CD8-positive, alpha-beta memory T cell (primary cell): ENCODE measurements at regions of chr1 and their contacts with region 1.

Region 1: DNA sequence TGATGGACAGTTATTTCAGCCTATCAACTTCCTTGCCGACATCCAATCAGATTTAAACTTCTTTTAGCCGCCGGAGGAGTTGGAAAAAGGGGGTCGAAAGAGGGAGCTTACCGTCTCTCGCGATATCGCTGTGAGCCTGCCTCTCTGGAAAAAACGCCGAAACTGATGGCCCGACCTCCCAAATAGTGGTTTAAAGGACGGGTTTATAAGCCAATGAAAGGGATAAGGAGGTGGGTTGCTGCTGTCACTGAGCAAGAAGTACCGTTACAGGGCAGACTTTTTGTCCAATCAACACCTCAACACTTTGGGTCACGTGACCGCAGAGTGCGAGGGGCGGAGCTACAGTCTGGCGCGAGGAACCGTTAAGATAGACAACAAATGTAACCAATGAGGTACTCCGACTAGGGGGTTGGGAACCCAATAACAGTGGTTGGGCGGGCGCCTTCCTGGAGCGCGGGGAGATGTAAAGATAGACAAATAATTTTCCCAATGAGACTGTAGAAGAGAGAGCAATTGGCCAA is at the start of gene RBM15:
- DNase-seq: peak; percentile 93 to 99 (median 99)
- H3K4me3 ChIP-seq: peak within 1 kb of the TSS; percentile 80
- H3K4me3 Mint-ChIP-seq: no peak within 1 kb of the TSS
- H3K27ac ChIP-seq: peak within 1 kb of the TSS; percentile 97
- H3K27ac Mint-ChIP-seq: peak within 1 kb of the TSS in 2 of 8 donors; percentile 98
- H3K4me1 ChIP-seq: peaks cover 48% of the 10 kb centered on the region
- H3K4me1 Mint-ChIP-seq: peaks cover 53 to 63% (median 62%) of the 10 kb centered on the region in 3 donors
- H3K27me3 ChIP-seq: no peaks in the 10 kb centered on the region
- H3K27me3 Mint-ChIP-seq: no peaks in the 10 kb centered on the region
- total RNA-seq, gene RBM15: 53.9 to 54.0 TPM

Region 2: DNA sequence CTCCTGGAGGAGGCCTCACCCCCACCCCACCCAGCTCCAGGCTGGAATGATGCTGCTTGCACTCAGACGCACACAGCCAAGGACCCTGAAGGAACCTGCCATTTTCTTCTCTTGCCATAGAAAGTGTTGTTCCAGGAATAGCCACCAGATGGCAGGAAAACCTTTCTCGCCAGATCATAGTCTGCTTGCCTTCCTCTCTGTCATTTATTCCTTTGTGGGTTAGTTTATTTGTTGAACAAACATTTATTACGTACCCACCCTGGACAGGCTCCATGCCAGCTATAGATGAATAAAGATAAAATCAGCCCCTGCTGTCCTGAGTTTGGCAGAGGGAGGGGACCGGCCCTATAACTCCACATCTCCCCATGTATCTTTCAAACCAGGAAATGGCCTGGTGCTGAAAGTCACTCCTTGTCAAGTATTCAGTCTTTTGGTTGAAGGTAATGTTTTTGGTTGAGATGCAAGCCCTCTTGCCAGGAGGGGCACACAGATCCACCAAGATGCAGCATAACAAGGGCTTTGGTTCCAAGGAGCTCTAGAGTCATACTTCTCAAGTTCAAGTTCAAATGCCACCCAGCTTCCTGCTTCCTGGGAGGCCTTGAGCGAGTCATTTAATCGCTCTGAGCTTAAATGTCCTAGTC is 135.8 kb before region 1 on chr1:
- CTCF ChIA-PET with region 1: interaction called, 77 read pairs
- POLR2A ChIA-PET with region 1: interaction called, 42 read pairs
- DNase-seq: peak; percentile 38 to 75 (median 67)
- H3K4me3 ChIP-seq: no peak overlapping the region
- H3K4me3 Mint-ChIP-seq: peak overlapping the region in 1 of 7 donors; percentile 32
- H3K27ac ChIP-seq: no peak overlapping the region
- H3K27ac Mint-ChIP-seq: peak overlapping the region; percentile 14 to 86 (median 74)
- H3K4me1 ChIP-seq: peaks cover 20% of the 10 kb centered on the region
- H3K4me1 Mint-ChIP-seq: peaks cover 14 to 26% (median 24%) of the 10 kb centered on the region in 3 donors
- H3K27me3 ChIP-seq: no peaks in the 10 kb centered on the region
- H3K27me3 Mint-ChIP-seq: peaks cover 0 to 2% of the 10 kb centered on the region in 2 donors

Region 3: GRCh38 chr1:110312188-110313121 is 26.5 kb before region 1 on chr1:
- CTCF ChIA-PET with region 1: interaction called, 19 read pairs
- POLR2A ChIA-PET with region 1: interaction called, 5 read pairs
- DNase-seq: peak; percentile 57 to 82 (median 62)
- H3K4me3 ChIP-seq: no peak overlapping the region
- H3K4me3 Mint-ChIP-seq: peak overlapping the region in 1 of 7 donors; percentile 54
- H3K27ac ChIP-seq: no peak overlapping the region
- H3K27ac Mint-ChIP-seq: no peak overlapping the region
- H3K4me1 ChIP-seq: no peaks in the 10 kb centered on the region
- H3K4me1 Mint-ChIP-seq: peaks cover 0 to 2% (median 0%) of the 10 kb centered on the region in 3 donors
- H3K27me3 ChIP-seq: no peaks in the 10 kb centered on the region
- H3K27me3 Mint-ChIP-seq: peaks cover 0 to 2% of the 10 kb centered on the region in 2 donors

Region 4: GRCh38 chr1:110384581-110385321 is 45.8 kb after region 1 on chr1:
- CTCF ChIA-PET with region 1: interaction called, 14 read pairs
- POLR2A ChIA-PET with region 1: interaction called, 4 read pairs
- DNase-seq: no peak
- H3K4me3 ChIP-seq: no peak overlapping the region
- H3K4me3 Mint-ChIP-seq: no peak overlapping the region
- H3K27ac ChIP-seq: no peak overlapping the region
- H3K27ac Mint-ChIP-seq: peak overlapping the region in 5 of 8 donors; percentile 29 to 95 (median 38)
- H3K4me1 ChIP-seq: peaks cover 10% of the 10 kb centered on the region
- H3K4me1 Mint-ChIP-seq: peaks cover 15 to 21% (median 20%) of the 10 kb centered on the region in 3 donors
- H3K27me3 ChIP-seq: no peaks in the 10 kb centered on the region
- H3K27me3 Mint-ChIP-seq: no peaks in the 10 kb centered on the region

Region 5: GRCh38 chr1:110407260-110408210 is 68.6 kb after region 1 on chr1 and contains the start of gene LAMTOR5:
- CTCF ChIA-PET with region 1: interaction called, 9 read pairs
- POLR2A ChIA-PET with region 1: interaction called, 16 read pairs
- DNase-seq: peak; percentile 85 to 93 (median 87)
- H3K4me3 ChIP-seq: peak within 1 kb of the TSS; percentile 100
- H3K4me3 Mint-ChIP-seq: peak within 1 kb of the TSS; percentile 95 to 100 (median 99)
- H3K27ac ChIP-seq: peak within 1 kb of the TSS; percentile 97
- H3K27ac Mint-ChIP-seq: peak within 1 kb of the TSS; percentile 90 to 100 (median 99)
- H3K4me1 ChIP-seq: peaks cover 22% of the 10 kb centered on the region
- H3K4me1 Mint-ChIP-seq: peaks cover 24 to 33% (median 31%) of the 10 kb centered on the region in 3 donors
- H3K27me3 ChIP-seq: no peaks in the 10 kb centered on the region
- H3K27me3 Mint-ChIP-seq: no peaks in the 10 kb centered on the region
- total RNA-seq, gene LAMTOR5: 148 to 157 TPM